ENCODE measurements at regions of chr11 and their contacts with region 1.

Region 1: DNA sequence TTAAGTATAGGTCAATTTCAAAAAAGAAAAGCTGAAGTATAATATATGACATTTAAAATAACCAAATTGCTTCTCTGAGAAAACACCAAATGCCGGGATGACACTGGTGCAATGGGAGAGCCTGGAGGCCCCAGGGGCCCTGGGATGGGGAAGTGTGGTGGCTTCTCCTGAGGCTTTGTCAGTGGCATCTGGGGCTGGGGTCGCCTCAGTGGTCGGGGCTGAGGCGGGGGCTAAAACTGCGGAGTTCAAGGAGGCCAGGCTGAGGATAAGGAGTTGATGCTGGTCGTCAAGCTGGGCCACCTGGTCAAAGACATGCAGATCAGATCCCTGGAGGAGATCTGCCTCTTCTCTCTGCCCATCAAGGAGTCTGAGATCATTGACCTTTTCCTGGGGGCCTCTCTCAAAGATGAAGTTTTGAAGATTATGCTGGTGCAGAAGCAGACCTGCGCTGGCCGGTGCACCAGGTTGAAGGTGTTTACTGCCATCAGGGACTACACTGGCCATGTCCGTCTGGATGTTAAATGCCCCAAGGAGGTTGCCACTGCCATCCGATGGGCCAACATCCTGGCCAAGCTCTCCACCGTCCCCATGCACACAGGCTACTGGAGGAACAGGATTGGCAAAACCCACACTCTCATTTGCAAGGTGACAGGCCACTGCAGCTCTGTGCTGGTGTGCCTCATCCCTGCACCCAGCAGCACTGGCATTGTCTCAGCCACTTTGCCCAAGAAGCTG is 660.1 kb upstream of the CCDC179 start:
- DNase-seq: no peak
- ATAC-seq: no peak
- H3K4me3 ChIP-seq: no peak overlapping the region
- H3K27ac ChIP-seq: no peak overlapping the region
- H3K4me1 ChIP-seq: no peaks in the 10 kb centered on the region
- H3K27me3 ChIP-seq: no peaks in the 10 kb centered on the region
- CTCF ChIP-seq: no peak
- POLR2A ChIP-seq: no peak
- RAD21 ChIP-seq: no peak

Region 2: GRCh38 chr11:23143022-23143421 is 377.4 kb before region 1 on chr11:
- CTCF ChIA-PET with region 1: no interaction called
- POLR2A ChIA-PET with region 1: no interaction called
- dilution Hi-C with region 1: no loop called
- in situ Hi-C with region 1: no loop called
- intact Hi-C with region 1: no loop called
- DNase-seq: peak; percentile 44
- ATAC-seq: peak; percentile 92
- H3K4me3 ChIP-seq: no peak overlapping the region
- H3K27ac ChIP-seq: no peak overlapping the region
- H3K4me1 ChIP-seq: no peaks in the 10 kb centered on the region
- H3K27me3 ChIP-seq: no peaks in the 10 kb centered on the region
- CTCF ChIP-seq: no peak
- POLR2A ChIP-seq: no peak
- RAD21 ChIP-seq: no peak

Region 3: DNA sequence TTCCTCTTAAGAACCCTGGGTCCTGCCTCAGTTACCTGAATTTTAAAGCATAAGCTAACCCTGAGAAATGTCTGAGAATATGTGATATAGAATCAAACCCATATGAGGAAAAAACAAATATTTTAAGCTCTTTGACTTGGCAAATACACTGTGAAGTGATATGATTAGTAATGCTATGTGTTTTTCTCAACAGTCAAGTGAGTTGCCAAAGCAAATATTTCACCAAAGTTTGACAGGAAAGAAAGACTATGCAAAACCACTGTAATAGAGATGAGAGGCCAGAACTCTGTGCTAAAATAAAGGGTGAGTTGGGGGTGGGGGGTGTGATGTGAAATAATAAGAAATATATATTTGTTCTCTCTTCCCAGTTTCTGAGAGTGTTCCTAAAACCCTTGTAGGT is 46.6 kb before region 1 on chr11:
- CTCF ChIA-PET with region 1: no interaction called
- POLR2A ChIA-PET with region 1: no interaction called
- dilution Hi-C with region 1: no loop called
- in situ Hi-C with region 1: no loop called
- intact Hi-C with region 1: loop called (anchors 10 kb)
- DNase-seq: no peak
- ATAC-seq: no peak
- H3K4me3 ChIP-seq: no peak overlapping the region
- H3K27ac ChIP-seq: no peak overlapping the region
- H3K4me1 ChIP-seq: no peaks in the 10 kb centered on the region
- H3K27me3 ChIP-seq: no peaks in the 10 kb centered on the region
- CTCF ChIP-seq: no peak
- POLR2A ChIP-seq: no peak
- RAD21 ChIP-seq: no peak